Activated CD4-positive, alpha-beta memory T cell treated with anti-CD3 and anti-CD28 coated beads, Interleukin-2, amount 10 ng/mL, durations not matched to agents 7 days and 5 days (primary cell): ENCODE measurements at regions of chrX and their contacts with region 1.

Region 1: DNA sequence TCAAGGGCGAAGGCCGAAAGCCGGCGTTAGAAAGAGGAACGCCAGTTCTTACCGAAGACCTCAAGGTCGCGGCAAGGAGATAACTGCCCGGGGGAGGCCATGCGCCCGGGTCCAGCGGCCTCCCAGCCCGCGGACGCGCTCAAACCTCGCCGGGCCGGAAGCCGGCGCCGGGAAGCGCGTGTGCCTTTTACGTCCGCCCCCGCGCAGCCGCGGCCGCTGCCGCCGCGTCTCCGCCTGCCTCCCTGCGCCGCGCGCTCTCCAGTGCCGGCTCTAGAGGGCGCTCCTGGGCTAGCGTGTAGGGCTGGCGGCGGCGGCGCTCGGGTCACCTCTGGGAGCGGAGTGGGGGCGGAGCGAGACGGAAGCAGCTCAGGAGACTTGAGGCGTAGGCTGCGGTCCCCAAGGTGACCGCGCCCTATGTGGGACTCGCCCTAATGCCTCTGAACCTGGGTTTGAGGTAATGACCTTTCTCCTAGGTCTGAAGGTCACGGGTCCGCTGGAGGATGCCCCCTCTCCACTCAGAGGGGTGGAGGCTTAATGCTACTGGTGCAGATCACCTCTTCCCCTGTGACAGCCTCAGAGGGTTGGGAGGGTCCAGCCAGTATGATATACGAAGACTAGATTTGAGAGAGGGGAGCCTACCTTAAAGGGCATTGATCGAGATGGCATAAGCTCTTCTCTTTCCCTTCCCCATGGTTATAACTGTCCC is 839 bp downstream of the SLC25A5 start:
- DNase-seq: peak; percentile 91
- H3K4me3 Mint-ChIP-seq: peak overlapping the region; percentile 82
- H3K27ac Mint-ChIP-seq: peak overlapping the region; percentile 89
- H3K4me1 Mint-ChIP-seq: peaks cover 22% of the 10 kb centered on the region
- H3K27me3 Mint-ChIP-seq: no peaks in the 10 kb centered on the region

Region 2: GRCh38 chrX:119482481-119483480 is 13.7 kb after region 1 on chrX:
- CTCF ChIA-PET with region 1: interaction called, 53 read pairs
- POLR2A ChIA-PET with region 1: interaction called, 49 read pairs
- DNase-seq: peak; percentile 72
- H3K4me3 Mint-ChIP-seq: peak overlapping the region; percentile 64
- H3K27ac Mint-ChIP-seq: peak overlapping the region; percentile 59
- H3K4me1 Mint-ChIP-seq: peaks cover 9% of the 10 kb centered on the region
- H3K27me3 Mint-ChIP-seq: peaks cover 4% of the 10 kb centered on the region

Region 3: DNA sequence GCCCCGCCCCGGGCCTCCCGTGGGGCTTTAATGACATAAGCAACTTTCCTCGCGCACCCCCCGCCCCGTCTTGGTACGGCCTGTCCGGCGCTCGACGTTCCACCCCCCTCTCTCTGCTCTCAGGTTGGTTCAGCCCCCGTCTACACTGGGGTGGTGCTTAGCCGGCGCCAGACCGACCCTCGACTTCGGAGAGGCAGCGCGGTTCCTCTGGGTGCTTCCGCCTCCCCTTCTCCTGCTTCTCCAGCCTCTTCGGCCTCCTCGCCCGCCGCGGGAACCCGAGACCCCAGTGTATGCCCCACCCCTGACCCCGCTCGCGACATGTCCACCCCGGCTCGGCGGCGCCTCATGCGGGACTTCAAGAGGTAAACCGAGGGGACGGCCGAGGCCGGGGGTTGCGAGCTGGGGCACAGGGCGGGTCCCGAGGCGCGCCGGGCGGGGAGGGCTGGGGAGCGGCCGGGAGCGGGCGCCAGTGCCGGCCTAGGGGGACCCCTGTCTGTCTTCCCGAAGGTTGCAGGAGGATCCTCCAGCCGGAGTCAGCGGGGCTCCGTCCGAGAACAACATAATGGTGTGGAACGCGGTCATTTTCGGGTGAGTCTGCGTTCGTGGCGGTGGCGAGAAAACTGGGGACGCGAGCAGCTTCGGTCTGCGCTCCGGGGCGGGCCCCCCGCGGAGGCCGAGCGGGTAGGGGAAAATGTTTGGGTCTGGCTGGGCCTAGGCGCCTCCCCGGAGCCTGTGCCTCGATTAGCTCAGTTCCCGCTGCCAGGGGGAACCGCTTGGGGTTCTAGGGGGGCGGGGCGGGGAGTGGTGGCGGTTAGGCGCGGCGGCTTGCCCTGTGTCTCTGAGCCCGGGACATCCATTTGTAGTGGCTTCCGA is 105.5 kb after region 1 on chrX and contains the start of gene UBE2A:
- CTCF ChIA-PET with region 1: no interaction called
- POLR2A ChIA-PET with region 1: interaction called, 13 read pairs
- DNase-seq: peak; percentile 88
- H3K4me3 Mint-ChIP-seq: peak within 1 kb of the TSS; percentile 93
- H3K27ac Mint-ChIP-seq: peak within 1 kb of the TSS; percentile 81
- H3K4me1 Mint-ChIP-seq: peaks cover 30% of the 10 kb centered on the region
- H3K27me3 Mint-ChIP-seq: no peaks in the 10 kb centered on the region
- total RNA-seq, gene UBE2A: 76.2 to 79.6 TPM

Region 4: GRCh38 chrX:119606280-119607015 is 137.4 kb after region 1 on chrX and contains the start of gene NKRF:
- CTCF ChIA-PET with region 1: interaction called, 3 read pairs
- POLR2A ChIA-PET with region 1: interaction called, 11 read pairs
- DNase-seq: peak; percentile 92
- H3K4me3 Mint-ChIP-seq: peak within 1 kb of the TSS; percentile 92
- H3K27ac Mint-ChIP-seq: peak within 1 kb of the TSS; percentile 90
- H3K4me1 Mint-ChIP-seq: peaks cover 42% of the 10 kb centered on the region
- H3K27me3 Mint-ChIP-seq: peaks cover 9% of the 10 kb centered on the region
- total RNA-seq, gene NKRF: 13.8 to 14.7 TPM